Activated T-helper 2 cell treated with anti-CD3 and anti-CD28 coated beads, Interferon-gamma antibody, Interleukin-2, Interleukin-4, amounts not matched to agents 10 μg/mL and 5 μg/mL and 100 μg/mL, durations not matched to agents 14 hours and 24 hours and 36 hours (primary cell): ENCODE measurements at regions of chr1 and their contacts with region 1.

Region 1: GRCh38 chr1:186985889-186986491 is 157.2 kb downstream of the PLA2G4A start:
- DNase-seq: no peak
- H3K4me3 Mint-ChIP-seq: no peak overlapping the region
- H3K27ac Mint-ChIP-seq: no peak overlapping the region
- H3K4me1 Mint-ChIP-seq: peaks cover 8% of the 10 kb centered on the region
- H3K27me3 Mint-ChIP-seq: peaks cover 2% of the 10 kb centered on the region

Region 2: DNA sequence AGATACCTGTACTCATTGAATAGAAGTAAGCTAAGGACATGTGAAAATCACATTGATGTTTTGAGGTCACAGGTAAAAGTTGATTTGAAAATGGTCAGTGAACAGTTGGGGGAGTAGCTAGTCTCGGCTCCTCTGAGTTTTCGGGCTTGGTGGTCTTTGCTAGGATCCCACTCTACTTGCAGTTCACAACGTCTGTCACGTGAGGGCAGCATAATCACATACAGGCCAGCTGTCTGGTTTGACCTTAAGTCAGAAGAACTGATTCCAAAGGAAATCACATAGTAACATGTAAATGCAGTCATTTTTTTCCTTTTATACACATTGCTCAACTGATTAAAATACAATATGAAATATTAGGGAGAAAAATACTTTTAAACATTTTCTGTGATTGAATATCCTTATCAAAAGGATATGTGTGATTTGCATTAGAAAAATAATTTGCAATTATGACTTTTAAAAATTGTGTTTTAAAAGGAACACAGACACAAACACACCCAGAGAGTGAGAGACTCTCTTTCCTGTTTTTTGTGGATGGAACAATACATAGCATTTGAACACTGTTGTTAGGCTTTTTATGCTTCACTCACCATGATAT is 503.2 kb before region 1 on chr1:
- intact Hi-C with region 1: loop called (anchors 1 kb)
- DNase-seq: peak; percentile 17
- H3K4me3 Mint-ChIP-seq: no peak overlapping the region
- H3K27ac Mint-ChIP-seq: no peak overlapping the region
- H3K4me1 Mint-ChIP-seq: no peaks in the 10 kb centered on the region
- H3K27me3 Mint-ChIP-seq: peaks cover 19% of the 10 kb centered on the region

Region 3: DNA sequence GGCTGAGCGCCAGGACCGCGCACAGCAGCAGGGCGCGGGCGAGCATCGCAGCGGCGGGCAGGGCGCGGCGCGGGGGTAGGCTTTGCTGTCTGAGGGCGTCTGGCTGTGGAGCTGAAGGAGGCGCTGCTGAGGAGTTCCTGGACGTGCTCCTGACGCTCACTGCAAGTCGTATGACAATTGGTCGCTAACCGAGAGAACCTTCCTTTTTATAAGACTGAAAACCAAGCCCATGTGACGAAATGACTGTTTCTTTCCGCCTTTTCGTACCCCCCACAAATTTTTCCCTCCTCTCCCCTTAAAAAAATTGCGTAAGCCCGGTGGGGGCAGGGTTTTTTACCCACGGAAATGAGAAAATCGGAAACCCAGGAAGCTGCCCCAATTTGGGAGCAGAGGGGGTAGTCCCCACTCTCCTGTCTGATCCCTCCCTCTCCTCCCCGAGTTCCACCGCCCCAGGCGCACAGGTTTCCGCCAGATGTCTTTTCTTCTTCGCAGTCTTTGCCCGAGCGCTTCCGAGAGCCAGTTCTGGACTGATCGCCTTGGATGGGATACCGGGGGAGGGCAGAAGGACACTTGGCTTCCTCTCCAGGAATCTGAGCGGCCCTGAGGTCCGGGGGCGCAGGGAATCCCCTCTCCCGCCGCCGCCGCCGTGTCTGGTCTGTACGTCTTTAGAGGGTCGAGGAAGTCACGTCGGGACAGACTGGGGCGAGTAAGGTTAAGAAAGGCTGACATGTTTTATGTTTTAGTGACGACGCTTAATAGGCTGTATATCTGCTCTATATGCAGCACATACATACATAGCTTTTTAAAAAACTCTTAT is 305.5 kb before region 1 on chr1 and contains the start of gene PTGS2:
- intact Hi-C with region 1: loop called (anchors 5 kb)
- DNase-seq: peak; percentile 62
- H3K4me3 Mint-ChIP-seq: peak within 1 kb of the TSS; percentile 87
- H3K27ac Mint-ChIP-seq: peak within 1 kb of the TSS; percentile 83
- H3K4me1 Mint-ChIP-seq: peaks cover 18% of the 10 kb centered on the region
- H3K27me3 Mint-ChIP-seq: peaks cover 49% of the 10 kb centered on the region
- total RNA-seq, gene PTGS2: 109 and 112 TPM in 2 replicates

Region 4: DNA sequence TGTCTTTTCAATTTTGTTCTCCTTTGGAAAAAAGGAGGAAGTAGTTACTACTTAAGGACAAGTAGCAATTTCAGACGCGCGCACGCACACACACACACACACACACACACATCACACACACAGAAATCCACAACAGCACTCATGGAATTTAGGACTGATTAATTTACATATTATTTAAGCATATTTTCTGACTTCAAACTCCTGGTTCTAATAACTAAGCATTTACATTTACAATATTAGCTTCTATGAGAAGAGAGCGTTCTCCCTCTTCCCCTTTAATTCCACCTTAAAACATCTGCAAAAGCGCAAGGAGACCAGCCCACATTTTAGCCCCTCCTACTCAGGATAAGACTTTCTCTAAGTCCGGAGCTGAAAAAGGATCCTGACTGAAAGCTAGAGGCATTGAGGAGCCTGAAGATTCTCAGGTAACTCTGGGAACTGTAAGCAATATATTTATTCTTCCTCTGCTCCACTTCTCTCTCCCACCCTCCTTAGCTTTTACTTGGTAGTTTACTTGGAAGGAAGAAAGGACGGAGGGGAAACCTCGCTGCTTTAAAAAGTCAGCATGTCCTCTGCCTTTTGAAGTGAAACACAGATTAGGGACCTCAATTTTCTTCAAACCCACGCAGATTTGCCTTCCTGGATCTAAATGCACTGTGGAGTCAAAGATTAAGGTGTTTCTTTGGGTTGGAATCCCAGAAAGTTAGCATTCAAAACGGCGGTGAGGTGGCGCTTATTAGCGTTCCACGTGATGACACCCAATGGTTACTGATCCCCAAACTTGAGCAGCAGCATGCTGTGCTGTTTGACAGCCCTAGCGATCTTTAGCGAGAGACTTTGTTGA is 157.2 kb before region 1 on chr1 and contains the start of gene PLA2G4A:
- intact Hi-C with region 1: loop called (anchors 10 kb)
- DNase-seq: no peak
- H3K4me3 Mint-ChIP-seq: peak within 1 kb of the TSS; percentile 83
- H3K27ac Mint-ChIP-seq: peak within 1 kb of the TSS; percentile 69
- H3K4me1 Mint-ChIP-seq: peaks cover 8% of the 10 kb centered on the region
- H3K27me3 Mint-ChIP-seq: peaks cover 18% of the 10 kb centered on the region
- total RNA-seq, gene PLA2G4A: 27.1 and 28.2 TPM in 2 replicates

Region 5: GRCh38 chr1:187013582-187014200 is 27.7 kb after region 1 on chr1:
- intact Hi-C with region 1: no loop called
- DNase-seq: no peak
- H3K4me3 Mint-ChIP-seq: no peak overlapping the region
- H3K27ac Mint-ChIP-seq: no peak overlapping the region
- H3K4me1 Mint-ChIP-seq: peaks cover 6% of the 10 kb centered on the region
- H3K27me3 Mint-ChIP-seq: no peaks in the 10 kb centered on the region